Heart right ventricle (tissue), 16 donors: ENCODE measurements at regions of chr22 and their contacts with region 1.

Region 1: GRCh38 chr22:42780070-42780540 is 59.4 kb upstream of the A4GALT start:
- DNase-seq: peak in 1 of 2 donors; percentile 88
- ATAC-seq: peak; percentile 63 to 91 (median 87)
- H3K4me3 ChIP-seq: no peak overlapping the region
- H3K27ac ChIP-seq: peak overlapping the region in 4 of 10 donors; percentile 8 to 35 (median 29)
- H3K4me1 ChIP-seq: peaks cover 0 to 9% (median 4%) of the 10 kb centered on the region in 9 donors
- H3K27me3 ChIP-seq: no peaks in the 10 kb centered on the region
- CTCF ChIP-seq: peak; percentile 78 to 92 (median 84)

Region 2: GRCh38 chr22:42717197-42717928 is 62.7 kb before region 1 on chr22:
- intact Hi-C with region 1: loop called in 1 of 10 experiments (anchors 1 kb)
- DNase-seq: no peak
- ATAC-seq: peak in 4 of 8 donors; percentile 18 to 29 (median 20)
- H3K4me3 ChIP-seq: peak overlapping the region in 4 of 10 donors; percentile 25 to 99 (median 63)
- H3K27ac ChIP-seq: peak overlapping the region; percentile 15 to 99 (median 86)
- H3K4me1 ChIP-seq: peaks cover 22 to 80% (median 65%) of the 10 kb centered on the region in 9 donors
- H3K27me3 ChIP-seq: peaks cover 0 to 45% (median 0%) of the 10 kb centered on the region in 7 donors
- CTCF ChIP-seq: no peak

Region 3: GRCh38 chr22:42743501-42743991 is 36.6 kb before region 1 on chr22:
- intact Hi-C with region 1: loop called in 1 of 10 experiments (anchors 5 kb)
- DNase-seq: peak; percentile 91 to 93
- ATAC-seq: peak; percentile 89 to 94 (median 92)
- H3K4me3 ChIP-seq: peak overlapping the region in 1 of 10 donors; percentile 10
- H3K27ac ChIP-seq: peak overlapping the region; percentile 67 to 96 (median 82)
- H3K4me1 ChIP-seq: peaks cover 13 to 49% (median 31%) of the 10 kb centered on the region in 9 donors
- H3K27me3 ChIP-seq: no peaks in the 10 kb centered on the region
- CTCF ChIP-seq: peak in 7 of 9 donors; percentile 3 to 42 (median 18)

Region 4: GRCh38 chr22:42820066-42820763 is 40.1 kb after region 1 on chr22:
- intact Hi-C with region 1: loop called in 2 of 10 experiments (anchors 5 kb)
- DNase-seq: no peak
- ATAC-seq: peak in 4 of 8 donors; percentile 40 to 74 (median 64)
- H3K4me3 ChIP-seq: no peak overlapping the region
- H3K27ac ChIP-seq: peak overlapping the region in 5 of 10 donors; percentile 6 to 49 (median 21)
- H3K4me1 ChIP-seq: peaks cover 0 to 16% (median 9%) of the 10 kb centered on the region in 9 donors
- H3K27me3 ChIP-seq: no peaks in the 10 kb centered on the region
- CTCF ChIP-seq: peak in 8 of 9 donors; percentile 54 to 80 (median 69)

Region 5: GRCh38 chr22:43036282-43036829 is 256.3 kb after region 1 on chr22:
- intact Hi-C with region 1: loop called in 1 of 10 experiments (anchors 10 kb)
- DNase-seq: peak; percentile 75
- ATAC-seq: peak; percentile 83 to 96 (median 93)
- H3K4me3 ChIP-seq: peak overlapping the region in 2 of 10 donors; percentile 13 to 20
- H3K27ac ChIP-seq: peak overlapping the region in 6 of 10 donors; percentile 25 to 60 (median 44)
- H3K4me1 ChIP-seq: peaks cover 0 to 24% (median 7%) of the 10 kb centered on the region in 9 donors
- H3K27me3 ChIP-seq: no peaks in the 10 kb centered on the region
- CTCF ChIP-seq: no peak

Region 6: GRCh38 chr22:43088979-43089717 is 309.0 kb after region 1 on chr22 and contains the start of gene TTLL1:
- intact Hi-C with region 1: loop called in 1 of 10 experiments (anchors 5 kb)
- DNase-seq: peak; percentile 88 to 91
- ATAC-seq: peak; percentile 91 to 96 (median 95)
- H3K4me3 ChIP-seq: peak within 1 kb of the TSS; percentile 51 to 100 (median 80)
- H3K27ac ChIP-seq: peak within 1 kb of the TSS in 9 of 10 donors; percentile 40 to 83 (median 71)
- H3K4me1 ChIP-seq: peaks cover 0 to 37% (median 15%) of the 10 kb centered on the region in 9 donors
- H3K27me3 ChIP-seq: no peaks in the 10 kb centered on the region
- CTCF ChIP-seq: peak in 3 of 9 donors; percentile 6 to 27 (median 14)
- total RNA-seq, gene TTLL1: 7.2 to 14.5 (median 11.0) TPM